ENCODE measurements at regions of chr11 and their contacts with region 1.

Region 1: GRCh38 chr11:134003792-134004495 is 47.2 kb upstream of the IGSF9B start:
- DNase-seq: no peak
- H3K4me3 ChIP-seq: no peak overlapping the region
- H3K27ac ChIP-seq: no peak overlapping the region
- H3K4me1 ChIP-seq: peaks cover 0 to 5% (median under 1%) of the 10 kb centered on the region in 4 experiments; a peak in 1 of 7 replicates
- H3K27me3 ChIP-seq: no peaks in the 10 kb centered on the region
- CTCF ChIP-seq: no peak
- EP300 ChIP-seq: no peak
- POLR2A ChIP-seq: no peak
- RAD21 ChIP-seq: no peak

Region 2: DNA sequence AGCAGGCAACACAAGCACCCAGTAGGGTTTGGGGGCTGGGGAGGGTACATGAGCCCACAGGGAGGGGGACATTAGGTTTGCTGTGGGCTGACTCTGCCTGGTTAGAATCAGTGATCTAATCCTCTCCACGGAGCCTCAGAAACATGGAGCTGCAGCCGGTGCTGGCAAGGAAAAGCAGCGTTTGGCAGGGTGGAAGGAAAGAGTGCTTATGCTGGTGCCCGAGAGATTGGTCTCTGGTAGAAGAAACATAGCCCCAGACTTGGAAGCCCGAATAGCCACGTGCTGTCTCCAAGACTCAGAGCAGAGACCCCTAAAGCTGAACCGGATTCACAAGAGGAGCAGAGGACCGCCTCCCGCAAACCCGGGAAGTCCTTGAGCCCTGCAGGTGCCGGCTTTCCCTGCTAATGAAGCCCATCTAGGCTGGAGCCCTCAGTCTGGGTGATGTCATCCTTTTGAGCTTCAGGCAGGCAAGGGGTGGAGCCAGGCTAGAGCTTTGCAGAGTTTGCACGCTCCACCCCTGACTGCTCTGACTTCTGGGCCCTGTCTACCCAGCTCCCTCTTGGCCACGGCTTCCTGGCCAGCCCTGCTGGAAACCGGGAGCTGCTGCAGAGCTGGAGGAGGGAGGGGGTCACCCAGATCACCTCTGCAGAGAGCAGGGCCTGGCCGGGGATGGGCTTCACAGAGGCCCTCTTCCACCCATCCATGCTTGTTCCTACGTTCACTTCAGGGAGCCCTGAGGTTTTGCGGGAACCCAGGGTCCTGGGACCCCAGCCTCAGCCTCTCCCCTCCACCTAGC is 29.9 kb after region 1 on chr11:
- CTCF ChIA-PET with region 1: interaction called, 13 read pairs
- POLR2A ChIA-PET with region 1: interaction called, 3 read pairs
- DNase-seq: peak; percentile 77 to 78
- H3K4me3 ChIP-seq: peak overlapping the region in 1 of 4 experiments; percentile 23; a peak in 1 of 8 replicates
- H3K27ac ChIP-seq: no peak overlapping the region
- H3K4me1 ChIP-seq: peaks cover 3 to 27% (median 23%) of the 10 kb centered on the region in 4 experiments
- H3K27me3 ChIP-seq: peaks cover 0 to 5% (median 3%) of the 10 kb centered on the region in 4 experiments; a peak in 3 of 7 replicates
- CTCF ChIP-seq: no peak
- EP300 ChIP-seq: no peak
- POLR2A ChIP-seq: peak in 1 of 2 experiments; percentile 64; a peak in 2 of 3 replicates
- RAD21 ChIP-seq: no peak

Region 3: DNA sequence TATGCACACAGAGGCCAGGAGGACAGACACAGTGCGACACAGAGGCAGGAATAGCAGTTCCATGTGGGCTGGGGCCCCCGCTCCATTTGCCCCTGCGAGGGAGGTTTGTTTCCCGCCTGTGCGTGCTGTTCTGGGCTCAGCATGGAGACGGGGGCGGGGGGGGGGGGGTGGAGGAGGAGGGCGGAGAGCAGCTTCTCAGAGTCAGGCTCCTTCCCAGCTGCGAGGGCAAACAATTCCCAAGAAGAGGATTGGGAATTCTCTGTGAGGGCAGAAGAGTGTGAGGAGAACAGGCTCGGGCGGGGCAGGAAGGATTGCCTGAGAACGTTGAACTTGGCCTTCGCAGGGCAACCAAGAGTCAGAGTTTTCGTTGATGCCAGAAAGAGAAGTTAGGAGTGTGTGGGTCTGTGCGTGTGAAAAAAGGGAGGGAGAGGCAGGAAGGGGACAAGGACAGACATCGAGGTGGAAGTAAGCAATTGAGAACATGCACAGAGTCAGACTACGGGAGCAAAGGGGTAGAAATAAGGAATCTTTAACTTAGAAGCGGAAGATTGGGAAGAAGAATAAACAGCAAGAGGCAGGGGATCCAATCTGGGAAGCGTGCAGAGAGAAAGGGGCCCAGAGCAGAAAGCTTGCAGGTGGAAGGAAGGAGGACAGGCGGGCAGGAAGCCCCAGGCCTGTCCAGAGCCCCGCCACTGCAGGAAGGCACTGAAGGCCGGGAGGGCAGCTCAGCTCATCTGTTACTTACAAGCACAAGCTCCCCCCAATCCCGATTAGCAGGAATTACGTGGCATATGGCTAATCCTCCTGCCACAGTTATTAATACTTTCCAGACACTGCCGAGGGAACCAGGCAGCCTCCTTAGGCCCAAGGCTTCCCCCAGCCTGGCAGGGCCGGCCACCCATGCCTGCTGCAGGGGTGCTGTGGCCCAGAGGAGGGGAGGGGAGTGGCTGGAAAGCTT is 49.3 kb after region 1 on chr11:
- CTCF ChIA-PET with region 1: no interaction called
- POLR2A ChIA-PET with region 1: no interaction called
- DNase-seq: no peak
- H3K4me3 ChIP-seq: no peak overlapping the region
- H3K27ac ChIP-seq: no peak overlapping the region
- H3K4me1 ChIP-seq: peaks cover 0 to 9% (median 4%) of the 10 kb centered on the region in 4 experiments; a peak in 4 of 7 replicates
- H3K27me3 ChIP-seq: no peaks in the 10 kb centered on the region; a peak in 2 of 7 replicates
- CTCF ChIP-seq: no peak
- EP300 ChIP-seq: no peak
- POLR2A ChIP-seq: no peak
- RAD21 ChIP-seq: no peak

Measured in H1 (cell line).